Activated CD8-positive, alpha-beta T cell treated with anti-CD3 and anti-CD28 coated beads for 36 hours (primary cell): ENCODE measurements at regions of chr3 and their contacts with region 1.

Region 1: GRCh38 chr3:169772897-169773828 is at the start of gene MYNN:
- DNase-seq: peak; percentile 95
- ATAC-seq: peak; percentile 81
- H3K4me3 Mint-ChIP-seq: peak within 1 kb of the TSS; percentile 94
- H3K27ac Mint-ChIP-seq: peak within 1 kb of the TSS; percentile 99
- H3K4me1 Mint-ChIP-seq: peaks cover 31% of the 10 kb centered on the region
- H3K27me3 Mint-ChIP-seq: no peaks in the 10 kb centered on the region
- CTCF ChIP-seq: no peak
- total RNA-seq, gene MYNN: 13.8 to 14.1 TPM

Region 2: GRCh38 chr3:169759256-169759655 is 13.9 kb before region 1 on chr3:
- CTCF ChIA-PET with region 1: interaction called, 20 read pairs
- POLR2A ChIA-PET with region 1: interaction called, 34 read pairs
- intact Hi-C with region 1: loop called (anchors 1 kb)
- DNase-seq: peak; percentile 16
- ATAC-seq: peak; percentile 85
- H3K4me3 Mint-ChIP-seq: peak overlapping the region; percentile 22
- H3K27ac Mint-ChIP-seq: peak overlapping the region; percentile 90
- H3K4me1 Mint-ChIP-seq: peaks cover 36% of the 10 kb centered on the region
- H3K27me3 Mint-ChIP-seq: no peaks in the 10 kb centered on the region
- CTCF ChIP-seq: no peak

Region 3: DNA sequence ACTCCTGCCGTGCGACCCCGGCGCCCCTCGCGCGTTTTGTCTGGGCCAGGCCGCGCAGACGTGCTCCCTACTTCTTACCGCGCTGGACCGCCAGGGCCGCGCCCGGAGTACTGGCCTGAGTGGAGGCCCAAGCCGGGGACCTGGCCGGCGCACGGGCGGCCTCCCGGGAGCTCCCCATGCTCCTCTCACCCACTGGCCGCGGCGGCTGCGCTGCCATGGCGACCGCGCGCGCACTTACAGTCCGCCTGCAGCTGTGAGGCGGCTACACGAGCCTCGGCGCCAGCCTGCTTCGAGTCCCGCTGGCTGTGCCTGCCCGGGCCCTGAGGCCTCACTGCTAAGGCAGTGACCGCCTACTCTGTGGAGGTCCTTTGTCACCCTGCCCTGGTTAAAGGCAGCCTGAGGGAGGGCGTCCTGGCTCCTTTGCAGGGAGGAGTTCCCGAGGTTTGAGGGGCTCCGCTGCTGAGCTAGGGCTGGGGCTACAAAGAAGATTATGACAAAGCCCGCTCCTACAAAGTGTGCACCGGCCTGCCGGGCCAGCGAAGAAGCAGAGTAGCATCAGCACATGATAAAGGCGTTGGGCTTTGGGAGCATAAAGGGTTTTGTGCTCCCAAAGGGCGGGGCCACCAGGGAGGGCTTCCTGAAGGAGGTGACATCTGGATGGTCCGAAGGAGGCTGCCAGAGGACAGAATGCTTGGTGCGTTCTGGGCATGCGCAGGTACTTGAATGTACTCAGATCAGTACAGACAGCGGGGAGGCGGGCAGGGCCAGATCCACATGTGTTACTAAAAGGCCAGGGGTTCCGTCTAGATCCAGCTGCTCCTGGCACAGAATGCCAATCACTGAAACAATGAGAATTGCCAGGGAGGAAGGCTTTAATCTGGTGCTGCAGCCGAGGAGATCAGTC is 39.4 kb after region 1 on chr3 and contains the starts of genes LRRC34 and LRRIQ4:
- CTCF ChIA-PET with region 1: interaction called, 17 read pairs
- POLR2A ChIA-PET with region 1: interaction called, 13 read pairs
- intact Hi-C with region 1: loop called (anchors 2 kb)
- DNase-seq: peak; percentile 93
- ATAC-seq: peak; percentile 66
- H3K4me3 Mint-ChIP-seq: peak within 1 kb of the TSS; percentile 81
- H3K27ac Mint-ChIP-seq: peak within 1 kb of the TSS; percentile 92
- H3K4me1 Mint-ChIP-seq: peaks cover 24% of the 10 kb centered on the region
- H3K27me3 Mint-ChIP-seq: no peaks in the 10 kb centered on the region
- CTCF ChIP-seq: no peak
- total RNA-seq, gene LRRC34: 6.6 to 6.8 TPM
- total RNA-seq, gene LRRIQ4: 0.18 TPM in 1 of 2 experiments, not detected in the other

Region 4: GRCh38 chr3:169822983-169823382 is 49.8 kb after region 1 on chr3:
- CTCF ChIA-PET with region 1: no interaction called
- POLR2A ChIA-PET with region 1: no interaction called
- intact Hi-C with region 1: no loop called
- DNase-seq: no peak
- ATAC-seq: no peak
- H3K4me3 Mint-ChIP-seq: no peak overlapping the region
- H3K27ac Mint-ChIP-seq: no peak overlapping the region
- H3K4me1 Mint-ChIP-seq: no peaks in the 10 kb centered on the region
- H3K27me3 Mint-ChIP-seq: peaks cover 11% of the 10 kb centered on the region
- CTCF ChIP-seq: no peak